CD8-positive, alpha-beta T cell (primary cell): ENCODE measurements at regions of chr4 and their contacts with region 1.

Region 1: GRCh38 chr4:38509551-38509950 is 154.4 kb upstream of the KLF3 start:
- DNase-seq: peak; percentile 16 to 86 (median 58)
- ATAC-seq: peak; percentile 93
- H3K4me3 ChIP-seq: peak overlapping the region; percentile 52 to 54
- H3K4me3 Mint-ChIP-seq: peak overlapping the region; percentile 88
- H3K27ac ChIP-seq: peak overlapping the region; percentile 40 to 73
- H3K27ac Mint-ChIP-seq: peak overlapping the region; percentile 90
- H3K4me1 ChIP-seq: peaks cover 72% of the 10 kb centered on the region
- H3K4me1 Mint-ChIP-seq: peaks cover 90% of the 10 kb centered on the region
- H3K27me3 ChIP-seq: no peaks in the 10 kb centered on the region
- H3K27me3 Mint-ChIP-seq: no peaks in the 10 kb centered on the region
- CTCF ChIP-seq: no peak

Region 2: DNA sequence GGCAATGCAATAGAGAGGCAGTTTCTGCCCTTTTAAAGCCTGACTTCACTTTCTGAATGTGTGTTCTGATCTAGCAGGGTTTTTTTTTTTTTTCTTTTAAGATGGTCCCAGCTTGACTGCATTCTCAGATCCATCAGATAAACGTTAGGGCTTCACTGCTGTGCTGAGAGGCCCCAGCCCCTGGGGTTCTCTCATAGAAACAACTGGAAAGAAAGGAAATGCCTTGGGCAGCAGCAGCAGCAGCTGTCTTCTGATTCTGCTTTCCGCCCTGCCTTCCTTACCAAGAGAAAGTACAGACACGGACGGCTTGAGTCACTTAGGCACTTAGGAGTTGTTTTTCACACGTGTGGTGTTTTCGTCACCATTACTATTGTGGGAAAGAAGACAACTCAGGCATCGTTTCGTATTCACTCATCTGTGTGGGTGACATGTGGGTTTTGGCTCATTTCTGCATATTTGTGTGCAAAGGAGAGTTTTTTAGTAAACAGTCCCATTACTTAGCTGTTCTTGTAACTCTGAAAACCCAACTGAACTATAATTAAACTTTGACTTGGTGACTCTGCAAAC is 377.4 kb before region 1 on chr4:
- CTCF ChIA-PET with region 1: no interaction called
- POLR2A ChIA-PET with region 1: no interaction called
- intact Hi-C with region 1: loop called in 1 of 2 experiments (anchors 5 kb)
- DNase-seq: peak; percentile 30 to 94 (median 66)
- ATAC-seq: peak; percentile 72
- H3K4me3 ChIP-seq: no peak overlapping the region
- H3K4me3 Mint-ChIP-seq: peak overlapping the region; percentile 17
- H3K27ac ChIP-seq: peak overlapping the region; percentile 25 to 66
- H3K27ac Mint-ChIP-seq: peak overlapping the region; percentile 93
- H3K4me1 ChIP-seq: peaks cover 53% of the 10 kb centered on the region
- H3K4me1 Mint-ChIP-seq: peaks cover 54% of the 10 kb centered on the region
- H3K27me3 ChIP-seq: no peaks in the 10 kb centered on the region
- H3K27me3 Mint-ChIP-seq: no peaks in the 10 kb centered on the region
- CTCF ChIP-seq: no peak

Region 3: DNA sequence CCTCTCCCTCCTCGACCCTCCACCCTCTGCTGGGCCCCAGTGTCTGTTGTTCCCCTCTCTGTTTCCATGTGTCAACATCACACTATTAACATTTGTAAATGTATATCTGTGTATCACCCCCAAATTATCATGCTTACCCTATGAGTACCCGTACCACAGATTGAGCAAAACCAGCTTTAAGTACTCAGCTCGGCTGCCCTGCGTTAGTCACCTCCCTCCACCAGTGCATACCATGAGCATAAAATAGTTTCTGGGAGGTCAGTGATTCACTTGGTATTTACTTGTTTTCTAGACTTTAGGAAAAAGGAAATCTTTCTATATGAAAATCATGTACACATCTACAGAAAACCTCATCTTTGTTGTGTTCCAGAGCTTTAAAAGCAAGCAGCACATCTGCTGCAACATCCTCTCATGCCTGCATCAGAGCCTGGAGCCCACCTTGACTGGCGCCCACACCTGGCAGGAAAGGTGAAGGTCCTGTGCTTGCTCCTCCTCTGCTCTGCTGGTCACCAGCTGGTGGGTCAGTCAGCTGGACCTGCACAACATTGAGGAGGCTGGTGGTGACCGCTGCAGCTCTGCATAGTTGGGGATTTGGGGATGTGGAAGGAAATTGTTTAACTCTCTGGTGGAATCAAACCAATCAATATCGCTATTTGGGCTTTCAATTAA is 59.9 kb before region 1 on chr4:
- CTCF ChIA-PET with region 1: no interaction called
- POLR2A ChIA-PET with region 1: no interaction called
- intact Hi-C with region 1: loop called in 1 of 2 experiments (anchors 5 kb)
- DNase-seq: no peak
- ATAC-seq: no peak
- H3K4me3 ChIP-seq: no peak overlapping the region
- H3K4me3 Mint-ChIP-seq: no peak overlapping the region
- H3K27ac ChIP-seq: no peak overlapping the region
- H3K27ac Mint-ChIP-seq: no peak overlapping the region
- H3K4me1 ChIP-seq: no peaks in the 10 kb centered on the region
- H3K4me1 Mint-ChIP-seq: peaks cover 11% of the 10 kb centered on the region
- H3K27me3 ChIP-seq: no peaks in the 10 kb centered on the region
- H3K27me3 Mint-ChIP-seq: no peaks in the 10 kb centered on the region
- CTCF ChIP-seq: no peak

Region 4: GRCh38 chr4:38491854-38492478 is 17.6 kb before region 1 on chr4:
- CTCF ChIA-PET with region 1: interaction called, 3 read pairs
- POLR2A ChIA-PET with region 1: interaction called, 7 read pairs
- intact Hi-C with region 1: loop called in 1 of 2 experiments (anchors 1 kb)
- DNase-seq: peak in 1 of 9 experiments; percentile 23
- ATAC-seq: no peak
- H3K4me3 ChIP-seq: no peak overlapping the region
- H3K4me3 Mint-ChIP-seq: no peak overlapping the region
- H3K27ac ChIP-seq: no peak overlapping the region
- H3K27ac Mint-ChIP-seq: peak overlapping the region; percentile 66
- H3K4me1 ChIP-seq: peaks cover 37% of the 10 kb centered on the region
- H3K4me1 Mint-ChIP-seq: peaks cover 45% of the 10 kb centered on the region
- H3K27me3 ChIP-seq: no peaks in the 10 kb centered on the region
- H3K27me3 Mint-ChIP-seq: no peaks in the 10 kb centered on the region
- CTCF ChIP-seq: no peak

Region 5: DNA sequence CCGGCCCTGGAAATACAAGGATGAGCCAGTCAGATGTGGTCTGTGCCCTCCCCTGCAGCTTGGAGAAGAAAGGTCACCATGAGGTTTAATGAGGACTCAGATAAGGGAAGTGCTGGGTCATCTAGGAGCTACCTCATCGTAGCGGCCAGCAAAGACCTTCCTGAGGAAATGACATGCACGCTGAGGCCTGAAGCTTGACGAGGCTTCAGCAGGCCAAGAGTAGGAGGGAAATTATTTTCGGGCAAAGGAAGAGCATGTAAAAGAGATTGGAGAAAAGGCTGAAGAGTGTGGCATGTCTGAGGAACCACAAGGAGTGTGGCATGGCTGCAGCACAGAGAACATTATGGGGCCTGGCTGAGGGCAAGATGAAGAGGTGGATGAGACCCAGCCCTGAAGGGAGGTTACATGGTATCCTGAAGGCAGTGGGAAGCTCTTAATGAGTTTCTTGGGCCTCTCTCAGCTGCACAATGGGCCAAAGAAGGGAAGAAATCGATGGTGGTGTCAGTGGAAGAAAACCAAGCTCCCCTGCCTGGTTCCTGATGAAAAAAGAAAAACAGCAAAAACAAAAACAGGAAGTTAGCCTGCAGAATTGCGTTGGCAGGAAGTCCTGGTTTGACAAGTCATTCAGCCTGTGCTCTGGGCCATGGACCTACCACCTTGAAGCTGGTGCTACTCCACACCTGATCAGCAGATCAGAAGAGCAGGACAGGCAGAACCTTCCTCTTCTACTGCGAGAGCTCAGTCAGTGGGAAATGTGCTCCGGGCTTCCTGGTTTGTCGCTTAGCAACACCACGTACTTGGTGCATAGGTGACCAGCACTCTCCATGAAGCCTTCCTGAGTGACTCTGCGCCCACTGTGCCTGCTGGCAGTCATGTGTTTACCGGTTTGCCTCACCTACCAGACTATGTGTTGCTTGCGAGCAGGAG is 19.9 kb after region 1 on chr4:
- CTCF ChIA-PET with region 1: interaction called, 6 read pairs
- POLR2A ChIA-PET with region 1: interaction called, 11 read pairs
- intact Hi-C with region 1: loop called in 1 of 2 experiments (anchors 2 kb)
- DNase-seq: peak in 8 of 9 experiments; percentile 9 to 81 (median 51)
- ATAC-seq: peak; percentile 92
- H3K4me3 ChIP-seq: no peak overlapping the region
- H3K4me3 Mint-ChIP-seq: peak overlapping the region; percentile 50
- H3K27ac ChIP-seq: peak overlapping the region in 1 of 2 experiments; percentile 80
- H3K27ac Mint-ChIP-seq: peak overlapping the region; percentile 91
- H3K4me1 ChIP-seq: peaks cover 18% of the 10 kb centered on the region
- H3K4me1 Mint-ChIP-seq: peaks cover 21% of the 10 kb centered on the region
- H3K27me3 ChIP-seq: no peaks in the 10 kb centered on the region
- H3K27me3 Mint-ChIP-seq: no peaks in the 10 kb centered on the region
- CTCF ChIP-seq: no peak